ENCODE measurements at regions of chr22 and their contacts with region 1.

Region 1: GRCh38 chr22:30033137-30033536 is 47.1 kb upstream of the HORMAD2 start:
- DNase-seq: no peak

Region 2: GRCh38 chr22:30314915-30315314 is 281.8 kb after region 1 on chr22:
- intact Hi-C with region 1: no loop called
- DNase-seq: no peak

Region 3: DNA sequence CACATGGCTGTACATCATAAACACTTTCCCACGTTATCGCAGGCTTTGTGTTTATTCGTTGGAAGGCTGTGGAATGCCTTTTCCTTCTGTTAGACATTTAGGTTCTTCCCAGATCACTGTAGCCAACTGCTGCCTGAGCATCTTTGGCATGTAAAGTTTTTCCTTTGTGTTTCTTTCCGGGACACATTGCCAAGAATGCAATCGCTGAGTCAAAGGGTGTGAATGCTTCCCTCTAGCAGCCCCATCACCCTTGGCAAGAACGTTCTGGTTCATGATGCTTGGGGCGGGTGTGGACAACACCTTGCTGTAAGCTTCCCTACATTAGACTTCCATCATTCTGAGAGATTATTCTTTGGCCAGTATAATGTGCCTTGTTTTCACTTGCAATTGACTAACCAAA is 797.8 kb after region 1 on chr22:
- intact Hi-C with region 1: loop called in 1 of 2 experiments (anchors 5 kb)
- DNase-seq: no peak

Measured in posterior vena cava (tissue), 2 donors.